ENCODE measurements at regions of chr3 and their contacts with region 1.

Region 1: DNA sequence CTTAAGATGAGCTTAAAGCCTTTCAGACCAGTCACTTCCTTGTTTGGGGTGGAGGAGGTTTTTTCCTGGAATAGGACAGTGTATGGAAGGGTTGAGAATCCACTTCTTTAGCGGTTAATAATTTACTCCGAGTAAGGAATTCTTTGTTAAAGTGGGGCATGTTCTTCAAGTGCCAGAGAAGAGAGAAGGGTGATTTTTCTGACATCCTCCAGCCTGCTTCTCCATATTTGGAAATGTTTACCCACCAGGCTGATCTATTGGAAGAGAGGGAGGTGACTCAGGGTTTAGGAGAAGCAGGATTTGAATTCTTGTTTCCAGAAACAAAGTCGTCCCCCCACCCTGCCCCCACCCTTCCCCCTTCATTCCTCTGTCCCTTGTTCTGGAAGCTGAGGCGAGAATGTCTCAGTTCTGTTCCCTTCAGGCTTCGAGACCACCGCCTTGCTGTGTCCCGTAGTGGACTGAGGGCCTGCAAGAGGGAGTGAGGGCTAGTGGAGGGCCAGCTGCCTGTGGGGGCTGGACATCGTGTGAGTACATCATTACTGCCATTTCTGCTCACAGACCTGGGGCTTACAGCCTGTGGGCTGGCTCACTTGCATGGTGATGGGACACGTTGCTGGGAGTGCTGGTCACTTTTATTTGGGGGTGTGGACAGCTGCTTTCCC is 58.5 kb downstream of the LPP start:
- DNase-seq: no peak
- ATAC-seq: no peak
- H3K4me3 Mint-ChIP-seq: no peak overlapping the region
- H3K27ac Mint-ChIP-seq: peak overlapping the region; percentile 88
- H3K4me1 Mint-ChIP-seq: peaks cover 43% of the 10 kb centered on the region
- H3K27me3 Mint-ChIP-seq: no peaks in the 10 kb centered on the region
- CTCF ChIP-seq: no peak

Region 2: DNA sequence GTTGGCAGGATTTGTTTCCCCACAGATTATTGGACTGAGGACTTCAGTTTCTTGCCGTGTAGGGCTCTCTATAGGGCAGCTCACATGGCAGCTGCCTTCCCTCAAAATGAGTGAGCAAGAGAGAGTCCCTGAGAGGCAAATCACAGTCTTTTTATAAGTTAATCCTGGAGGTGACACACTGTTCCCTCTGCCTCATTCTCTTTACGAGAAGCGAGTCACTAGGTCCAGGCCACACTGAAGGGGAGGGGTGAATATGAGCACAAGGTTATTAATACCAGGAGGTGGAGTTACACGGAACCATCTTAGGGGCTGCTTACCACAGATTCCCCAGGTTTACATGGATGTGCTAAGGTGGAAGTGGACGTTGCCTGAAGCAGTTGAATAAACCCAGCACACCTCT is 18.5 kb after region 1 on chr3:
- CTCF ChIA-PET with region 1: no interaction called
- POLR2A ChIA-PET with region 1: interaction called, 3 read pairs
- intact Hi-C with region 1: loop called (anchors 1 kb)
- DNase-seq: no peak
- ATAC-seq: no peak
- H3K4me3 Mint-ChIP-seq: no peak overlapping the region
- H3K27ac Mint-ChIP-seq: no peak overlapping the region
- H3K4me1 Mint-ChIP-seq: peaks cover 38% of the 10 kb centered on the region
- H3K27me3 Mint-ChIP-seq: no peaks in the 10 kb centered on the region
- CTCF ChIP-seq: no peak

Region 3: GRCh38 chr3:188244395-188244861 is 32.0 kb after region 1 on chr3:
- CTCF ChIA-PET with region 1: no interaction called
- POLR2A ChIA-PET with region 1: interaction called, 4 read pairs
- intact Hi-C with region 1: loop called (anchors 1 kb)
- DNase-seq: no peak
- ATAC-seq: peak; percentile 78
- H3K4me3 Mint-ChIP-seq: peak overlapping the region; percentile 24
- H3K27ac Mint-ChIP-seq: peak overlapping the region; percentile 62
- H3K4me1 Mint-ChIP-seq: peaks cover 74% of the 10 kb centered on the region
- H3K27me3 Mint-ChIP-seq: no peaks in the 10 kb centered on the region
- CTCF ChIP-seq: no peak

Region 4: DNA sequence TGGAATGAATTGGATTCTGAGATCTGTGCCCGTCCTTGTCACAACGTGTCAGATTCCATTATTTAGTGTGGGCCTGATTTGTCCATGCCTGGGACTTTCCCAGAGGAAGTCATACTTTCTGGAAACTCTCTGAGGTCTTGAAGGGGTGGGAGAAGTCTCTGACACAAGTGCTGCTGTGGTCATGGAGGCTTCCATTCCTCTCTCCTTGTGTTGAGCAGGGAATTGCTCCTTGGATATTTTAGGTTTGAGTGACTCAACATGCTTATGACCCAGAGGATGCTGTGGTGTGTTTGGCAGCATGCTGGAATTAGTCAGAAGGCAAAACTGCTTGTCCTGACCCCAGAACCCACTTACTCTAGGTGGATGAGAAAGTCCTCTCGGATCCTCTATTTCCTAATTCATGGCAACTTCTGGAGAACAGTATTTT is 73.7 kb after region 1 on chr3:
- CTCF ChIA-PET with region 1: no interaction called
- POLR2A ChIA-PET with region 1: interaction called, 3 read pairs
- intact Hi-C with region 1: loop called (anchors 5 kb)
- DNase-seq: no peak
- ATAC-seq: no peak
- H3K4me3 Mint-ChIP-seq: no peak overlapping the region
- H3K27ac Mint-ChIP-seq: no peak overlapping the region
- H3K4me1 Mint-ChIP-seq: peaks cover 42% of the 10 kb centered on the region
- H3K27me3 Mint-ChIP-seq: no peaks in the 10 kb centered on the region
- CTCF ChIP-seq: no peak

Region 5: GRCh38 chr3:188339410-188340295 is 127.2 kb after region 1 on chr3:
- CTCF ChIA-PET with region 1: no interaction called
- POLR2A ChIA-PET with region 1: interaction called, 10 read pairs
- intact Hi-C with region 1: no loop called
- DNase-seq: no peak
- ATAC-seq: peak; percentile 87
- H3K4me3 Mint-ChIP-seq: peak overlapping the region; percentile 55
- H3K27ac Mint-ChIP-seq: peak overlapping the region; percentile 87
- H3K4me1 Mint-ChIP-seq: peaks cover 49% of the 10 kb centered on the region
- H3K27me3 Mint-ChIP-seq: no peaks in the 10 kb centered on the region
- CTCF ChIP-seq: no peak